Aorta (tissue), 5 donors: ENCODE measurements at regions of chr2 and their contacts with region 1.

Region 1: GRCh38 chr2:72862239-72862988 is 24.8 kb upstream of the SPR start:
- DNase-seq: peak; percentile 90 to 97
- ATAC-seq: peak; percentile 98
- H3K4me3 ChIP-seq: no peak overlapping the region
- H3K27ac ChIP-seq: no peak overlapping the region
- H3K4me1 ChIP-seq: no peaks in the 10 kb centered on the region
- H3K27me3 ChIP-seq: peaks cover 0 to 3% of the 10 kb centered on the region in 2 donors

Region 2: DNA sequence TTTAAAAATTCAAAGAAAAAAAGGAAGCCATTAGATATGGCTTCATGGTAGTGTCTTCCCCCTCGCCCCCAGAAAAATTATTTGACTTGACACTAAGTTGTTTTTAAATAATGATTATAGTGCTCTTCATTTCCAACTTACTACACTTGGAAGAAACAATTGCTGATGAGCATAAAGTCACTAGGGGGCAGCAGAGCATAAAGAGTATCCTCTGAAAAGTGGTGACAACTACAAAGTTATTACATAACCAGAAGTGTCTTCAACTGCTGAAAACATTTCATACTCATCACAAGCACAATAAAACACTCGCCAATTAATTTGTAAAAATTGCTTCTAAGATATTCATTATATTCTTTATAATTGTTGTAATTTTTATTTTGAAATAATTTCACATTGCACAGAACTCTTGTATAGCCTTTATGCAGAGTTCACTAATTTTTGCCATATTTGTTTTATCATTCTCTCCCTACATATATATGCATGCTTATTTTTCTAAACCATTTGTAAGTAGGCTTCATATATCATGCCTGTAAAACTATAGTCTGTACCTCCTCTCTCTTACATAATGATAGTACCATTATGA is 91.4 kb before region 1 on chr2:
- intact Hi-C with region 1: loop called (anchors 1 kb)
- DNase-seq: no peak
- ATAC-seq: peak; percentile 68
- H3K4me3 ChIP-seq: no peak overlapping the region
- H3K27ac ChIP-seq: no peak overlapping the region
- H3K4me1 ChIP-seq: no peaks in the 10 kb centered on the region
- H3K27me3 ChIP-seq: no peaks in the 10 kb centered on the region

Region 3: DNA sequence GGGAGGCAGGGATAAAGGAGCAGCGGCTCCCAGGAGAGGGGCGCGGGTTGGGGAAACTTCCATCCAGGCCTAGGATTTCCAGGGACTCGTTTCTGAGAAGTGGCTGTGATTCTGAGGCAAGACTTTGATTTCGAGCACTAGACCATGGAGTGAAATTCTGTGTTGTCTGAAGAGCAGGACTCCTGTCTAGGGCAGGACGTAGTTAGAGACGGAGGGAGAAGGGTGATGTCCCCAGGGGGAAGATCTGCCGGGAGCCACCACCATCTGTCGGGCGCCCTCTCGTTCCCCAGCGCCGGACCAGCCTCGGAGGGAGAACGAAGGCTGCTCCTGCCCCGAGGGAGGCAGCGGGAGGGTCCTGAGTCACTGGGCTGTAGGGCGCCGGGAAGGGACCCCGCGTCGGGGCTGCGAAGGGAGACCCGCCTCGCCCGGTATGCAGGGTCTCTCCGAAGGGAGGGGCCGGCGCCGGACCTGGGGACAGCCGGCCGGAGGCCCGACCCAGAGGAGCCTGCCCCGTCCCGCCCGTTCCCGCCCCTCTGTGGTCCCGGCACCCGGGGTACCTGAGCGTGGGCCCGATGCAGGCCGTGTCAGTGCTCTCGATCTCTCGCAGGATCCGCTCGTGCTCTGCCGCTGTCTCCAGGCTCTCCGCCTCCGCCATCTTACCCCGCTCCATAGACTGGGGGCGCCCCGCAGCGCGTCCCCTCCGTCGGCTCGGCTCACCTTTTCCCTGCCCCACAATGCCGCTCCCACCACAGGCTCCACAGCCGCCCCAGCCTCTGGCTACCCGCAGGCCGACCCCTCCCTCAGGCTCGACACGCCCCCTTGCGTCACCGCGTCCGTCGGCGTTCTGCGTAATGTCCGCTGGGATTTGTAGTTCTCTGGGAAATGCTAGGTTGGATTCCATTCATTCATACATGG is 36.9 kb before region 1 on chr2 and contains the start of gene EXOC6B:
- intact Hi-C with region 1: no loop called
- DNase-seq: peak; percentile 95 to 99
- ATAC-seq: peak; percentile 96
- H3K4me3 ChIP-seq: peak within 1 kb of the TSS; percentile 76 to 85
- H3K27ac ChIP-seq: peak within 1 kb of the TSS in 1 of 2 donors; percentile 15
- H3K4me1 ChIP-seq: peaks cover 0 to 2% of the 10 kb centered on the region in 2 donors
- H3K27me3 ChIP-seq: no peaks in the 10 kb centered on the region
- total RNA-seq, gene EXOC6B: 45.3 to 45.9 TPM

Region 4: GRCh38 chr2:72913531-72914205 is 51.3 kb after region 1 on chr2:
- intact Hi-C with region 1: no loop called
- DNase-seq: no peak
- ATAC-seq: no peak
- H3K4me3 ChIP-seq: no peak overlapping the region
- H3K27ac ChIP-seq: no peak overlapping the region
- H3K4me1 ChIP-seq: no peaks in the 10 kb centered on the region
- H3K27me3 ChIP-seq: peaks cover 0 to 3% of the 10 kb centered on the region in 2 donors

Region 5: DNA sequence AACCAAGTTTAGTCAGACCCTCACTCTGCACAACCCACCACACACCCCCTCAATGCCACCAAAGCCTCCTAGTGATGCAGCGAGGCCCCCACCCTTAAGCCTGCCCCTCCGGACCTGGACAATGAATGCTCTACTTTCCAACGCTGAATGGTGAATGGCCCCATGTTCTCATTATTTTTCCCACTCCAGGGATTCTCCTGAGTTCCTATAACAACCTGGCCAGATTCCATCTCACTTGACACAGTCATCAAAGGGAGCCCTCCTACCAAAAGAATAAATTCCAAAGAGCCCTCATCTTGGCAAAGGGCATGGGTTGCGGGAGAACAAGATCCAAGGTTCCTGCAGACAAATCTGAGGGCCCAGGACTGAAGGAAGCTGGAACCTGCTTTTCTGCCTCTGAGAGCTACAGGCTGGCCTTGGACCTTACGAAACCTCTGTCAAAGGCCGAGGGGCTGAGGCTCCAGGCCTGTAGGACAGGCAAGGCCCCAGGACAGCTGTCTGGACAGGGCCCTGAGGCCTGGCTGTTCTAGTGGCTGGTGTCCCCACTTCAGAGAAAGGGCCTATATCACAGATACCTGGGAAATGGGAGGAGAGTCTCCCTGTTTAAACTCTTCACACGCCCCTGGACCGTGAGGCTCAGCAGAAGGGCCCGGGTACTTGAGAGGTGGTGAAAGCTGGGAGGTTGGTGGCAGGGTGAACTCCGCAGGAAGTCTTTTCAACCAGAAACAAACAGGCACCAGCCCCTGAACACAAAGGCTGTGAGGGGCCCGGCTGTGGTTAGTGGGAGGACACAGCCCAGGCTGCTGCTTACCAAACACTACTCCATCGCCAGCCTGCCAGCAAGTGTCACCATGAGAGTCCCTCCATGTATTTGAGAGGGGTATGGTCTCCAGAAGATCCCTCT is 181.8 kb after region 1 on chr2:
- intact Hi-C with region 1: no loop called
- DNase-seq: no peak
- ATAC-seq: no peak
- H3K4me3 ChIP-seq: no peak overlapping the region
- H3K27ac ChIP-seq: no peak overlapping the region
- H3K4me1 ChIP-seq: no peaks in the 10 kb centered on the region
- H3K27me3 ChIP-seq: no peaks in the 10 kb centered on the region